ENCODE measurements at regions of chr11 and their contacts with region 1.

Region 1: GRCh38 chr11:66556086-66556485 is 9.4 kb downstream of the ACTN3 start:
- DNase-seq: no peak
- H3K4me3 ChIP-seq: no peak overlapping the region
- H3K27ac ChIP-seq: no peak overlapping the region
- H3K4me1 ChIP-seq: peaks cover 3% of the 10 kb centered on the region
- H3K27me3 ChIP-seq: no peaks in the 10 kb centered on the region
- CTCF ChIP-seq: no peak
- EP300 ChIP-seq: no peak
- POLR2A ChIP-seq: no peak

Region 2: DNA sequence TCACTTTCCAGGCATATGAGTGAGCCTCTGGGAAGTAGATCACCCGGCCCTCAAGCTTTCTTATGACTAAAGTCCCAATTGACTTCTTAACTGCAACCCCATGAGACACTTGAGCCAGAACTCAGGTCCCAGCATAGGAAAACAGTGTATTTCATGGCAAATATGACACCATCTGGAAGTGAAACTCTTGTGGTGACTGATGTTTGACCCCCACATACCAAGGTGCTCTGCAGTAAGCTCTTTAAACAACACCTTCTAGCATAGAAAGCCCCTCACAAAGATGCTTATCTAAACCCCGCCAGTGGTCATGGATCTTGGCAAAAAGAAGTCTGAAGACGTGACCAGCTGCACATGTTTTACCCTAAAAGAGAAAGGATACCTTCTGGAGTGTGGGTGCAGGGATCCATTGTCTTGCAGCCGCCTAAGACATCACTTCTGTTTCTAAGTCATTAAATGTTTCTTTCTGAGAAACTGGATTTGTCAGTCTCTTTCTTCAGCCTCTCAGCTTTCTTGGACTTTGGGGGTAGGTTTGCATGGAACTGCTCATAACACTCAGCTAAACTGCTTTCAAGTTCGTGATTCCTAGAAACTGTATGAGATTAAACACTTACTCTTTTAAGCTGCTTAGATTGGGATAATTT is 96.8 kb before region 1 on chr11:
- intact Hi-C with region 1: no loop called
- DNase-seq: no peak
- H3K4me3 ChIP-seq: no peak overlapping the region
- H3K27ac ChIP-seq: no peak overlapping the region
- H3K4me1 ChIP-seq: no peaks in the 10 kb centered on the region
- H3K27me3 ChIP-seq: no peaks in the 10 kb centered on the region
- CTCF ChIP-seq: no peak
- EP300 ChIP-seq: no peak
- POLR2A ChIP-seq: no peak

Region 3: DNA sequence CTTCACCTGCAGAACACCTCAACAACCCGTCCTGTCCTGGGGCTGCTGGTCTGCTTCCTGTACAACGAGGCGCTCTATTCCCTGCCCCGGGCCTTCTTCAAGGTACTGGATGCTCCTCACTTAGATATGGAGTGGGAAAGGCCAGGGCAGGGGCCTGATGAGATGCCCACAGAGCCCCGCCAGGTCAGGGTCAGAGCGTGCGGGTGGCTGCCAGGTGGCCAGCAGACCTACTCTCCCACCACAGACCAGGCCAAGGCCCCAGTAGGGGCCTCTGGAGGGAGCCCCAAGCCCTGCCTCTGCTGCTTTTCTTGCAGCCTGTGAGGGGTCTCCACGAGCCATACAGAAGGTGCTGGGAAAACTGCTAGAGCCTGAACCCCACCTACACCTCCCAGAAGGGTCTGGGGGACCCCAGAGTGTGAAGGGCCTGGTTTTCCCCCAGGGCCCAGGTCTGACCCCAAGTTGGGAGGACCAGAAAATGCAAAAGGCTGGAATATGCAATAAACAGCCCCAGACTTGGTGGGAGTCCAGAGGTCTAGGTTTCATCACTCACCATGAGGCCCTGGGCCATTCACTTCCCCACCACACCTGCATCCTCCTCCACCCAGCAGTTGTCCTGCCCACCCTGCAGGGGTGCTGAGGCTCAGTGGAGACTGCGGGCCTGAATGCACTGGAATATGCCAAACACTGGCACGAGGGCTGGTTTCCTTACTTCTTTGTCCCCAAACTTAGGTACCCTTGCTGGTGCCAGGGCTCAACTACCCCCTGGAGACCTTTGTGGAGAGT is 25.0 kb before region 1 on chr11:
- intact Hi-C with region 1: loop called in 1 of 4 experiments (anchors 2 kb)
- DNase-seq: no peak
- H3K4me3 ChIP-seq: no peak overlapping the region
- H3K27ac ChIP-seq: no peak overlapping the region
- H3K4me1 ChIP-seq: no peaks in the 10 kb centered on the region
- H3K27me3 ChIP-seq: no peaks in the 10 kb centered on the region
- CTCF ChIP-seq: no peak
- EP300 ChIP-seq: no peak
- POLR2A ChIP-seq: no peak

Region 4: DNA sequence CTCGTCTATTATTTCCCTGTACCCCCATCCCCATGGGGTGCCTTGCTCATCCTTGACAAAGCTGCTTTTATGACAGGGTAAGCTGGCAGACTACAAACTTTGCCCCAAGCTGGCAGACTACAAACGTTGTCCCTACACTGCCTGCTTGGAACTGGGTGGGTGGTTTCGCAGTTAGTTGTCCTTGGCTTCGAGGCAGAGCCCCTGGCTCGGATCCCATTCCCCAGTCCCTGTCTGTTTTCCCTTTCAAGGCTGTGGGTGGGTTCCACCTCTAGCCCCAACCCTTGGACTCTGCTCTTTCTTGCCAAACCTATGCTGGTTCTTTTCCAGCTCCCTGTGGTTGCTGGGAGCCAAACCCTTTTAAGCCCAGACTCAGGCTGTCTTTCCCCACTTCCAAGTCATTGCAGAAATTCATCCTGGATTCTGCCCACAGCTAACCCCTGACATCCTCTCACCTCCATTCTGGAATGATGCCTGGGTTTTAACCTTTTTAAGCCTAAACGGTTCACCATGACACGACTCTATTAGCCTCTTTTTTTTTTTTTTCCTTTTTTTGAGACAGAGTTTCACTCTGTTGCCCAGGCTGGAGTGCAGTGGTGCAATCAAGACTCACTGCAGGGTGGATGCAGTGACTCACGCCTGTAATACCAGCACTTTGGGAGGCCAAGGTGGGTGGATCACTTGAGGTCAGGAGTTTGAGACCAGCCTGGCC is 51.2 kb after region 1 on chr11:
- intact Hi-C with region 1: no loop called
- DNase-seq: peak; percentile 85 to 91 (median 86)
- H3K4me3 ChIP-seq: no peak overlapping the region
- H3K27ac ChIP-seq: peak overlapping the region; percentile 13 to 61
- H3K4me1 ChIP-seq: peaks cover 3% of the 10 kb centered on the region
- H3K27me3 ChIP-seq: no peaks in the 10 kb centered on the region
- CTCF ChIP-seq: no peak
- EP300 ChIP-seq: no peak
- POLR2A ChIP-seq: no peak

Measured in ovary (tissue), 10 donors.